Activated CD4-positive, alpha-beta T cell treated with anti-CD3 and anti-CD28 coated beads for 36 hours (primary cell): ENCODE measurements at regions of chr12 and their contacts with region 1.

Region 1: GRCh38 chr12:12456637-12457036 is 99.8 kb downstream of the BORCS5 start:
- DNase-seq: no peak
- ATAC-seq: peak; percentile 57
- H3K4me3 Mint-ChIP-seq: peak overlapping the region; percentile 3
- H3K27ac Mint-ChIP-seq: peak overlapping the region; percentile 88
- H3K4me1 Mint-ChIP-seq: peaks cover 46% of the 10 kb centered on the region
- H3K27me3 Mint-ChIP-seq: no peaks in the 10 kb centered on the region

Region 2: DNA sequence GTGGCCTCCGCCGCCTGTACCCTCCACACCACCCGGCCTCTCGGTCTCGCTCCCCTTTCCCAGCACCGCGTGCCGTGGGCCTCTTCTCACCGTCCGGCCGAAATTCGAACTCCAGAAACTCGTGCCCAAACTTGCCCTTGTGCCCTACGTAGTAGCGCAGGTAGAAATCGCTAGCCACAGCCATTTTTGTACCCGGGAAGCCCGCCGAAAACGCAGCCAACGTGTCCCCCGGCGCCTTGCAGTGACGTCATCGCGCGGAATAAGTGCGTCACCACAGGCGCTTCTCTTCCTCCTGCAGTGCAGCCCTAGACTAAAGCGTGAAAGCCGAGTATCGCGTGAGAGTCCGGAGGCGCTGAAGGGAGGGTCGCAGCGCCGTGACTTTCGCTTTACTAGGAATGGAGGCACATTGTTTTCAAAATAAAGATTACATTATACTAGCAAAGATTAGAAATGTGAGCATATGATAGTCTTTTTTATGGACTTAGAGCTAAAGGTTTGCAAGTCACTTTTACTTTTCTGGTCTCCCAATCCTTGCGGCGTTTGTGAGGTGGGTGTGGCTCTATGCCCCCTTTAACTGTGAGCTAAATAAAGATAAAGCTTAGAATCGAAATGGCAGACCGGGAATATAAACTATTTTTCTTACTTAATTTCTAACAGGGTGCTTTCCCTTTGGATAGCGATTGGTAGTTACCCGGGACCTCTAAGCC is 1843.1 kb before region 1 on chr12 and contains the start of gene MAGOHB:
- CTCF ChIA-PET with region 1: no interaction called
- POLR2A ChIA-PET with region 1: no interaction called
- intact Hi-C with region 1: no loop called
- DNase-seq: peak; percentile 99
- ATAC-seq: peak; percentile 96
- H3K4me3 Mint-ChIP-seq: peak within 1 kb of the TSS; percentile 99
- H3K27ac Mint-ChIP-seq: peak within 1 kb of the TSS; percentile 100
- H3K4me1 Mint-ChIP-seq: peaks cover 25% of the 10 kb centered on the region
- H3K27me3 Mint-ChIP-seq: peaks cover 6% of the 10 kb centered on the region
- total RNA-seq, gene MAGOHB: 66.3 to 89.3 TPM

Region 3: DNA sequence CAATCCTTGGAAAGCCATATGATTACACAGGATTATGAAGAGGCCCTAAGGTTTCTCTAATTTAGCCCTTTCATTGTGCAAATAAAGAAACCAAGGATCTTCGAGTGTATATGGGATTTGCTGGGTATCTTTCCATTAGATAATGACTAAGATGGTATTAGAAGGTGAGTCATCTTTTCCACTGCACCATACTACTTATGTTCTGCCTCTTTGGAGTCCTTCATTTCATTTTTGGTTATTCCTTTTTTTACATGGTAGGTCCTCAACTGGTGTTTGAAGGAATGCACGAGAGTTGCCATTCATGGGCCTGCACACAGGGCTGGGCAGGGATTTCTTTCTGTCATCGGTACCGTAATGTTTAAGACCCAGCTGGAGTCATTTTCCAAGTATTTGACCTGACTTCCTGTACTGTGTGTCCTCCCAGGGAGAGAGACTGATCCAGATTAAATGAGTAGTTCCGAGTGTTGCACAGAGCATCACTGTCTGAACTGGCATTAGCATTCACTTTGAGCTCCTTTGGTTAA is 14.0 kb before region 1 on chr12:
- CTCF ChIA-PET with region 1: interaction called, 5 read pairs
- POLR2A ChIA-PET with region 1: interaction called, 15 read pairs
- intact Hi-C with region 1: loop called (anchors 1 kb)
- DNase-seq: no peak
- ATAC-seq: peak; percentile 16
- H3K4me3 Mint-ChIP-seq: peak overlapping the region; percentile 46
- H3K27ac Mint-ChIP-seq: peak overlapping the region; percentile 98
- H3K4me1 Mint-ChIP-seq: peaks cover 81% of the 10 kb centered on the region
- H3K27me3 Mint-ChIP-seq: no peaks in the 10 kb centered on the region

Region 4: DNA sequence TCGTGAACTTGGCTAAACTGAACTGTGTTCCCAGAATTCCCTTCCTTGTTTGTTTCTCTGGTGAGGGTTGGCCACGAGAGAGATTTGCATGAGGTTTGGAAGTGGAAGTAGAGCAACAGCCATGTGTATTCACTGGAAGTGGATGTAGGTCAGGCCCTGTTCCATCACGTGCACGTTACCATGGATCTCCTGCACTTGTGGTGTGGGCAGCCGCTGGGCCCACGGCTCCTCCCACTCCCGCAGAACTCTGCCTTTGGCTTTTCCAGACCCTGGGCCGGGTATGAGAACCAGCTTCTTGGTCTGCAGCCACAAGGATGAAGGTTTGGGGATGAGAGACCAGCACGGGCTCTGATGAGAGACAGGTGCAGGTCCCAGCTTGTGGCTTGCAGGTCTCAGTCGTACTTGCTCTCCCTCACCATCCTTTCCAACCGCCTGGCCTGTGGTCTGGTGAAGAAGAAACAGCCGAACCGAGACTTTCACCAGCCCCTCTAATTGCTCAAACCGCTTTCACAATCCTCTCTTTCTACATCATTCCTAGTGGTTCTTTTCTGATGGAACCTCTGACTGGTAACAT is 11.1 kb after region 1 on chr12:
- CTCF ChIA-PET with region 1: interaction called, 12 read pairs
- POLR2A ChIA-PET with region 1: no interaction called
- intact Hi-C with region 1: no loop called
- DNase-seq: peak; percentile 61
- ATAC-seq: peak; percentile 45
- H3K4me3 Mint-ChIP-seq: peak overlapping the region; percentile 22
- H3K27ac Mint-ChIP-seq: peak overlapping the region; percentile 92
- H3K4me1 Mint-ChIP-seq: peaks cover 84% of the 10 kb centered on the region
- H3K27me3 Mint-ChIP-seq: no peaks in the 10 kb centered on the region